Sigmoid colon (tissue), 7 donors: ENCODE measurements at regions of chr12 and their contacts with region 1.

Region 1: DNA sequence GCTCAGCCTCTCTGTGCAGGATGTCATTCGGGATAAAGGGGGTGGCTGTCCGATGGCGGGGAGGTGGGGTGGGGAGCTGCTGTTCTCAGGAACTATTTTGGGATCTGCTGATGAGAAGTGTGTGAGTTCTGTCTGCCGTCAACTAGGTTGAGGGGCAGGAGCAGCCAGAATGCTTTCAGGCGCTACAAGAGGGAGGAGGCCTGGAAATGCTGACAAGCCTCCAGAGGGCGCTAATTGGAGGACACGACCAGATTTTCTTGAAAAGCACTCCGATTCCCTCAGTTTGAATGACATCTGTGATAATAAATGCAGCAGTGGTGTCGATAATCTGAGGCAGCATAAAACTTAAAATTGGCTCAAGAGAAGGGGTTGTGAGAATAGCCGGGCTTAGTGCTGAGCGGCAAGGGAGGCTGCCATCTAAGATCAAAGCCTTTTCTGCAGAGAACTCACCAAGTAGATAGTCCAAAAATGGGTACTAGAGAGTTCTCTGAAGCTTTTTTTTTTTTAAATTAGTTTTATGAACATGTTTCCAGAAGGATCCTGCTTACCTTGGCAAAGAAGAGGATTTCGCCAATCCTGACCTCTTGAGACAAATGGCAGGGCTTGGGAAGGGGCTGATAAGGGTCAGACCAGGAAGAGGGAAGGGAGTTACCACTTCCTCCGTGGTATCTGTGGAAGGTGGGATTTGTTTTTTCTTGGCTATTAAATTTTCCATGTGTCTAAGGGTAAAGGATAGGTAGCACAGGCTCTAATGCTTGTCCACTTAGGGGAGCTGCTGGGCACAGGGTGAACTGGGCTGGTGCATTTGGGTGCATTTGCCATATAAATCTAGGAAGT is 94.4 kb downstream of the CRACR2A start:
- DNase-seq: no peak
- H3K4me3 ChIP-seq: no peak overlapping the region
- H3K27ac ChIP-seq: no peak overlapping the region
- H3K4me1 ChIP-seq: peaks cover 0 to 7% (median 4%) of the 10 kb centered on the region in 4 donors
- H3K27me3 ChIP-seq: no peaks in the 10 kb centered on the region
- CTCF ChIP-seq: peak in 3 of 4 experiments; percentile 10 to 28 (median 22)
- EP300 ChIP-seq: no peak
- POLR2A ChIP-seq: no peak

Region 2: DNA sequence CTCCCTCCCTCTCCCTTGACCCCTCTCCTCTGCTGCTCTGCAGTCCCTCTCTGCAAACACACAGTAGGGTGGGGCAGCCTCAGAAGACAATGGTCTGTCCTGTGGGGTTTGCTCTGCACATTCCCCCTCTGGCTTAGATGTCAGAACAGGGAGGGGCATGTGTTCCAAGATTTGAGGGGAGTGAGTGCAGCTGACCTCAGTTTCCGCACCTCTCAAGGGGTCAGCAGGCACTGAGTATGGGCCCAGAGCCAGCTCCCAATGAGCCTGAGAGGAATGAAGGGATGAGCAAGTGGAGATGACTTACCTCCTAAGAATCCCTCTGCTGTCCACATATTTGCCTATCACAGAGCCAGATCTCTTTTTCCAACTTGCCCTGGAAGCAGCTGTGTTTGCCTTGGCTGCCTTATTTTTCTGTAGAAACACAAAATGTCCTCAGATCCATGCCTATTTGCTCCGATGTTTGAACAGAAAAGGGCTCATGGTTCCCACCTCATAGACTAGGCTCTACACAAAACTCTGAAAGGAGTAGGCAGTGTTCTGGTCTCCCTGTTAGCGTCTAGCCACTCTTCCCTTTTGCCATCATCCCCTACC is 17.0 kb before region 1 on chr12:
- intact Hi-C with region 1: no loop called
- DNase-seq: no peak
- H3K4me3 ChIP-seq: no peak overlapping the region
- H3K27ac ChIP-seq: no peak overlapping the region
- H3K4me1 ChIP-seq: no peaks in the 10 kb centered on the region
- H3K27me3 ChIP-seq: no peaks in the 10 kb centered on the region
- CTCF ChIP-seq: no peak
- EP300 ChIP-seq: no peak
- POLR2A ChIP-seq: no peak

Region 3: DNA sequence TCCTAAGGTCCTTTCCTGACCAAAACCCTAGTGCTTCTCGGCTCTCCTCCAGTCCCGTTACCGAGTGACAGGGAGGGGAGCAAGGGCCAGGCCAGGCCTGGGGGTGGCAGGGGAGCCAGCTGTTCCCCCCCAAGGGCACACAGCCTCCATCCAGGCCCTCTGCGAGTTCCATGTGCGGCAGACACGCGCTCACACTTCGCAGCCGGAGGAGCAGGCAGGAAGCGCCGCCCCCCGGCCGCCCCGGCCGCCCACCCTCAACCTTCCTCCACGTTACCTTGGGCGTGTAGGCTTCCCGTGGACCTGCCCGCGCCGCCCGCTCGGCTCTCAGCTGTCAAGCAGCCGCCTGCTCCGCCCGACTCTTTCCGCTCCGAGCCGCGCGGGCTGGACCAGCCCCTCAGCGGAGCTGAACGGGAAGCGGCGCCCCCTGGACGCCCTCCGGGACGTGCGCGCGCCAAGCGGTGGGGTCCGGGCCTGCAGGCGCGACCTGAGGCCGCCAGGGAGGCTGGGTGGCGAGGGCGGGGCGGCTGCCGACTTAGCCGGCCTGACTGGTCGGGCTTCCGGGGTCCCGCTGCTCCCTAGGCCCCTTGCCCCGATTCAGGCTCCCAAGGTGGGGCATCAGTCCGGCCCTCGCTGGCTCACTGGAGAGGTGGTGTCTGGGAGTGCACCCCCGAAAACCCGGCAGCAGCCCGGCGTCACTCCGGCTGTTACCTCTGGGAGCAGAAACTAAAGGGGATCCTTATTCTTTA is 94.4 kb after region 1 on chr12 and contains the start of gene CRACR2A:
- intact Hi-C with region 1: loop called (anchors 5 kb)
- DNase-seq: peak; percentile 80
- H3K4me3 ChIP-seq: peak within 1 kb of the TSS; percentile 21 to 58 (median 48)
- H3K27ac ChIP-seq: peak within 1 kb of the TSS; percentile 65 to 80 (median 70)
- H3K4me1 ChIP-seq: peaks cover 0 to 24% (median 17%) of the 10 kb centered on the region in 4 donors
- H3K27me3 ChIP-seq: no peaks in the 10 kb centered on the region
- CTCF ChIP-seq: peak; percentile 33 to 69 (median 60)
- EP300 ChIP-seq: no peak
- POLR2A ChIP-seq: no peak
- total RNA-seq, gene CRACR2A: 1.1 to 4.2 (median 2.0) TPM

Region 4: DNA sequence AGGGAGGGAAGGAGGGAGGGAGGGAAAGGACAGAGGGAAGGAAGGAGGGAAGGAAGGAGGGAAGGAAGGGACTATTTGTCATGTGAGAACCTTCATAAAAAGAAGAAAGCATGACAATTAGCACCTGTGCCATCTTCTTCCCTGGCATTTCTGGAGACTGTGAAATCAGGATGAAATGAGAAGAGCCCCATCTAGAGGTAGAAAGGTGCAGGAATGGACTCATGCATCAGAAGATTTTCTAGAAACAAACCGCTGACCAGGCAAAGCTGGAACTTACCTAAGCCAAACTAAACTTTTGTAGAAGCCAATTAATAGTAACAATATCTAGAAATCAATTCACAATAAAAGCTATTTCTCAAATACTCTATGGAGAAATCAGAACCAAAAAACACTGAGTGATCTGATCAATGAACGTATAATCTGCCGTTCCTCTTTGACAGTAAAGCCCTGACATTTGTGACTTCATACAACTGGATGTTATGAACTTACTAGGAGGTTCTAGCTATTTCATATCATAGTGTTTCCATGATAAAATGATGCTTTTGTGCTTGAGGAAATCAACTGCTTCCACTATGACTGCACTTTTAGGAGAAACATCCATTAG is 118.8 kb after region 1 on chr12:
- intact Hi-C with region 1: loop called (anchors 10 kb)
- DNase-seq: no peak
- H3K4me3 ChIP-seq: no peak overlapping the region
- H3K27ac ChIP-seq: no peak overlapping the region
- H3K4me1 ChIP-seq: no peaks in the 10 kb centered on the region
- H3K27me3 ChIP-seq: no peaks in the 10 kb centered on the region
- CTCF ChIP-seq: peak; percentile 34 to 68 (median 58)
- EP300 ChIP-seq: no peak
- POLR2A ChIP-seq: no peak